ENCODE measurements at regions of chr19 and their contacts with region 1.

Region 1: GRCh38 chr19:47514869-47515588 is at the start of gene NAPA:
- DNase-seq: peak; percentile 100
- H3K4me3 Mint-ChIP-seq: peak within 1 kb of the TSS; percentile 95
- H3K27ac Mint-ChIP-seq: peak within 1 kb of the TSS; percentile 92
- H3K4me1 Mint-ChIP-seq: peaks cover 63% of the 10 kb centered on the region
- H3K27me3 Mint-ChIP-seq: peaks cover 4% of the 10 kb centered on the region
- total RNA-seq, gene NAPA: 66.4 and 68.7 TPM in 2 replicates

Region 2: DNA sequence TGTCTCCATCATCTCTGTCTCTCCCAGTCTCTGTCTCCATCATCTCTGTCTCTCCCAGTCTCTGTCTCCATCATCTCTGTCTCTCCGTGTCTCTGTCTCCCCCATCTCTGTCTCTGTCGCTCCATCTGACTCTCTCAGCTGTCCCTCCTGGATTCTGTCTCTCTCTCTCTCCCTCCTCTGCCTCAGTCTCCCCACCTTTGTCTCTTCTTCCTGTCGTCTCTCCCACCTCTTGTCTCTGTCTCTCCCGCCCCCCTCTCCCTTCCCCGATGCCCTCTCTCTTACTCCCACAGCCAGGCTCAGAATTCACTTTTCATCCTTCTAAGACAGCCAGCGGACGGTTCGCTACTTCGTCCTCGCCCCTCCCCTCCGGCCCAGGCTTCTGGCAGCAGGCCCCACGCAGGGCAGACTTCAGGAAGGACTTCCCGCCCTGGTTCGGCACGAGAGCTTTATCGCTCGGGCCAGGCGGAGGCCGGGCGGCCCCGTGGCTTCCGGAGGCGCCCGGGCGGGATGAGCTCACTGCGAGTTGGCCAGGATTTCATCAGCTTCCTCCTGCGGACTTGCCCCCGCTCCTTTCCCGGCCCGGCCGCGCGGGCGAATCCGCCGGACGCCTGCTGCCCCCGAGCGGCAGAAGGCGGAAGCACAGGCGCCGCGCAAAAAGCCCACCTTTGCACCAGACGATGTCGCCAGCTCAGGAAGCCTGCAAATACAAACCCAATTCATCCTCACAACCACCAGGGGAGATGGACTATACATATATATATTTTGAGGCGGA is 271.1 kb before region 1 on chr19:
- intact Hi-C with region 1: no loop called
- DNase-seq: peak; percentile 90
- H3K4me3 Mint-ChIP-seq: peak overlapping the region; percentile 80
- H3K27ac Mint-ChIP-seq: peak overlapping the region; percentile 93
- H3K4me1 Mint-ChIP-seq: peaks cover 14% of the 10 kb centered on the region
- H3K27me3 Mint-ChIP-seq: peaks cover 7% of the 10 kb centered on the region

Region 3: GRCh38 chr19:47348819-47349795 is 165.9 kb before region 1 on chr19 and contains the start of gene DHX34:
- intact Hi-C with region 1: loop called (anchors 1 kb)
- DNase-seq: peak; percentile 100
- H3K4me3 Mint-ChIP-seq: peak within 1 kb of the TSS; percentile 93
- H3K27ac Mint-ChIP-seq: peak within 1 kb of the TSS; percentile 94
- H3K4me1 Mint-ChIP-seq: peaks cover 40% of the 10 kb centered on the region
- H3K27me3 Mint-ChIP-seq: no peaks in the 10 kb centered on the region
- total RNA-seq, gene DHX34: 31.1 and 33.9 TPM in 2 replicates

Region 4: GRCh38 chr19:47483800-47484690 is 31.0 kb before region 1 on chr19 and contains the start of gene KPTN:
- intact Hi-C with region 1: loop called (anchors 1 kb)
- DNase-seq: peak; percentile 86
- H3K4me3 Mint-ChIP-seq: peak within 1 kb of the TSS; percentile 99
- H3K27ac Mint-ChIP-seq: peak within 1 kb of the TSS; percentile 99
- H3K4me1 Mint-ChIP-seq: peaks cover 23% of the 10 kb centered on the region
- H3K27me3 Mint-ChIP-seq: peaks cover 4% of the 10 kb centered on the region
- total RNA-seq, gene KPTN: 9.6 and 10.8 TPM in 2 replicates

Region 5: DNA sequence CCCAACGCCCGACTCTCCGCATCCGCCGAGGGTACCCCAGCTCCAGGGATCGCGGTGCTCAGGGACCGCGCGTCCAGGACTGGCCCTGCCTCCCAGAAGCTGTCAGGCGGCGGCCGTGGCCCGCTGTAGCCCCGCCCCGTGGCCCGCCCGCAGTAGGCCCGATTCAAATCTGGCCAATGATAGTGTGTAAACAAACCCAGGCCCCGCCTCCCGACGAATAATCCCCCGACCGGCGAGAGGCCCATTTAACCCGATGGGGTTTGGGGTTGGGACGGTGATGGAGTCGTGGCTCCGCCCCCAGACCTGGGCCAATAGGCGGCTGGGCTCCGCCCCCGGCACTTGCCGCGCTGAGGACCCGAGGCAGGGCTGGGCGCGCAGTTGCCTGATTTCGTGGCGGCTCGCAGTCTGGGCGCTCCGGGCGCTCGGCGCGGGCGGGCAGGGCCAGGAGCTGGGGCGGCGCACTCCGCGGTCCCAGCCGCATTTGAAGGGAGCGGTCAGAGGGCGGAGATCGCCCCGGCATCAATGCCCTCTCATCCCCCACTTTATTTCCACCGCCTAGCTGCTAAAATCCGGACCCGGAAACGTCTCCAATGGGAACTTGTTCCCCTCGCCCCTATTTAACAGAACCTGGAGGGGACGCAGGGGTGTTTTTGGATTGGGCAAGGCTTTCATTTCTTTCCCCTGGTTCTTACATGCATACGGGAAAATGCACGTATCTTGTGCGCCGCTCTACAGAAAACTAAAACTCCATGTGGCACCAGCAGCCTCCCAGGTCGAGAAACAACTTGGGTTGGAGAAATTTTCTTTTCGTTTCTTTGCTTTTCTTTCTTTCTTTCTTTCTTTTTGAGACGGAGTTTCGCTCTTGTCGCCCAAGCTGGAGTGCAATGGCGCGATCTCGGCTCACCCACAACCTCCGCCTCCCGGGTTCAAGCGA is 85.5 kb after region 1 on chr19:
- intact Hi-C with region 1: loop called (anchors 1 kb)
- DNase-seq: peak; percentile 98
- H3K4me3 Mint-ChIP-seq: peak overlapping the region; percentile 87
- H3K27ac Mint-ChIP-seq: peak overlapping the region; percentile 89
- H3K4me1 Mint-ChIP-seq: peaks cover 31% of the 10 kb centered on the region
- H3K27me3 Mint-ChIP-seq: peaks cover 1% of the 10 kb centered on the region

Region 6: GRCh38 chr19:47697863-47698609 is 183.0 kb after region 1 on chr19:
- intact Hi-C with region 1: loop called (anchors 1 kb)
- DNase-seq: peak; percentile 38
- H3K4me3 Mint-ChIP-seq: no peak overlapping the region
- H3K27ac Mint-ChIP-seq: peak overlapping the region; percentile 23
- H3K4me1 Mint-ChIP-seq: no peaks in the 10 kb centered on the region
- H3K27me3 Mint-ChIP-seq: no peaks in the 10 kb centered on the region